ENCODE measurements at regions of chr9 and their contacts with region 1.

Region 1: DNA sequence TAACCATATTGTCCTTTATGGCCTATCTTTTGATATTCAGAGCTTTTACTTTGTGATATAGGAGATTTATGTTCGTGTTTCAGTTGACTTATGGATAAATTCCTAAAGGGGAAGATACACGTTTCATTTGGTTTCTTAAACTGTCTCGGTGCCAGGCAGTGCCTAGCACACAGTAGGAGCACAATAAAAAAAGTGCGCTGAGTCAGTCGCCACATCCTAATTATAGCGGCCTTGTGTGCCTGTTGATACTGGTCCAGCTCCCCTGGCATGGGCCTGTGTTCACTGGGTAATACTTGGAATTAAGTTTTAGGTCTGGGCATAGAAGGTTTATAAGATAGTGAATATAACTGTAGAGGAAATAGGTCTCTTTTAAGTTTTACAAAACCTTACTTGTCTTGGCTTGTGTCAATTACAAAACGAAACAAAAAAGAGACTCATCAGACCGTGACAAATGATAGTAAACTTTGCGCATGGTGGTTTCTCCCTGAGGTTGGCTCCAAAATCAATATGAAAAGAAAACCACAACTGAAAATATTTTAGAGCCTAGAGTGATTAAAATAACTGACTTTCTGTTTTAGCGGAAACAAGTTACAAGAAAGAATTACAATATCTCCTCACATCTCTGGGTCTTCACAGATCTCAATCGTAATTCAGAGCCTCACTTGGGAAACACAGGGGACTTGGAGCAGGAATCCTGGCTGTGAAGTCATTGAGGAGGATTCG is 84.8 kb downstream of the MVB12B start:
- DNase-seq: peak; percentile 93
- ATAC-seq: peak; percentile 96
- H3K4me3 ChIP-seq: peak overlapping the region; percentile 39; the same call in 1 of the 2 replicates
- H3K27ac ChIP-seq: no peak overlapping the region; the same call in 1 of the 2 replicates
- H3K4me1 ChIP-seq: peaks cover 12% of the 10 kb centered on the region
- H3K27me3 ChIP-seq: peaks cover 0 to under 1% of the 10 kb centered on the region in 2 experiments; a peak in 2 of 4 replicates
- CTCF ChIP-seq: no peak
- EP300 ChIP-seq: peak; percentile 35 to 90; a peak in 3 of 4 replicates
- POLR2A ChIP-seq: no peak
- RAD21 ChIP-seq: no peak

Region 2: DNA sequence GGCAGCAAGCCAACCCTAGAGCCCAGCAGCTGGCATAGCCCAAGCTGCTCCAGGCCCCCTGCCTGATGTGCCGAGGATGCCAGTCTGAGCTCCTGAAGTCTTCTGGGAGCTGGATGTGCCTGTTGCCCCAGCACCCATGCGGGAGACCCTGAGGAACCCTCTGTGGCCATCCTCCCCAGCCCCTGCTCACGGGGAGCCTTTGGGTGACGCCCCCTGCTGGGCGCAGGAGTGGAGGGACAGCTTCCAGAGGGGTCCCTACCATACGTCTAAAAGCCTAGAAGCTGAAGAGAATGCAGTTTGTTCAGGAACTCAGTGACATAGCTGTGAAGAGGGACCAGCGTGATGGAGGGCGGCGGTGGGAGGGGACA is 117.9 kb before region 1 on chr9:
- CTCF ChIA-PET with region 1: no interaction called
- POLR2A ChIA-PET with region 1: no interaction called
- RAD21 ChIA-PET with region 1: no interaction called
- SMC1A ChIA-PET with region 1: no interaction called
- in situ Hi-C with region 1: no loop called
- intact Hi-C with region 1: no loop called
- DNase-seq: no peak
- ATAC-seq: no peak
- H3K4me3 ChIP-seq: no peak overlapping the region
- H3K27ac ChIP-seq: no peak overlapping the region
- H3K4me1 ChIP-seq: no peaks in the 10 kb centered on the region
- H3K27me3 ChIP-seq: no peaks in the 10 kb centered on the region; a peak in 1 of 4 replicates
- CTCF ChIP-seq: peak in 2 of 3 experiments; percentile 5 to 28; a peak in 2 of 6 replicates
- EP300 ChIP-seq: no peak
- POLR2A ChIP-seq: no peak
- RAD21 ChIP-seq: no peak

Region 3: DNA sequence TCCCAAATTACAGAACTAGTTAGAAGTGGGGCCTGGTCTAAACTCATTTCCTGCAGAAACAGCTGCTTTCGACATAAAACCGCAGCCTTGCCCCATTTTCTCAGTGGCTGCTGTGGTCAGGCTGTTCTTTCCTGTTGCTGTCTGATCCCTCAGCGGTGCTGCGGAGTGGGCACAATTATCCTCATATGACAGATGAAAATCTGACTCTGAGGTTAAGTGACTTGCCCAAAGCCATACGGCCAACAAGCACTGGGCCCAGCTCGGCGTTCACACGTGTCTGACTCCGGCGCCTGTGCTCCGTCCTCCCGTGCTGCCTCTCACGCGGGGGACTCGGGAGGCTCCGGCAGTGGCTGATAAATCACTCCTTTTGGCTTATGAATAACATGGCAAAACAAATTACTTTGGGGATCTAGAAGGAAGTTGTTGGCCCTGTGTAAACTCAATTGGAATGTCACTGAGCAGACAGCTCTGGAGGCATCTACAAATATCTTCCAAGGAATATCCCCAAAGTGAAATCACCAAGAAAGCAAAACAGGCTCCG is 59.8 kb after region 1 on chr9:
- CTCF ChIA-PET with region 1: no interaction called
- POLR2A ChIA-PET with region 1: no interaction called
- RAD21 ChIA-PET with region 1: no interaction called
- SMC1A ChIA-PET with region 1: no interaction called
- in situ Hi-C with region 1: loop called (anchors 10 kb)
- intact Hi-C with region 1: loop called (anchors 5 kb)
- DNase-seq: peak; percentile 52
- ATAC-seq: peak; percentile 94
- H3K4me3 ChIP-seq: peak overlapping the region; percentile 2; the same call in 1 of the 2 replicates
- H3K27ac ChIP-seq: no peak overlapping the region
- H3K4me1 ChIP-seq: peaks cover 15% of the 10 kb centered on the region
- H3K27me3 ChIP-seq: peaks cover under 1 to 4% of the 10 kb centered on the region in 2 experiments; a peak in 3 of 4 replicates
- CTCF ChIP-seq: no peak
- EP300 ChIP-seq: 0 out of 4 replicates have a peak, but pooled peaks of 1 of the 2 experiments have one; percentile 14
- POLR2A ChIP-seq: no peak
- RAD21 ChIP-seq: no peak